ENCODE measurements at regions of chr9 and their contacts with region 1.

Region 1: DNA sequence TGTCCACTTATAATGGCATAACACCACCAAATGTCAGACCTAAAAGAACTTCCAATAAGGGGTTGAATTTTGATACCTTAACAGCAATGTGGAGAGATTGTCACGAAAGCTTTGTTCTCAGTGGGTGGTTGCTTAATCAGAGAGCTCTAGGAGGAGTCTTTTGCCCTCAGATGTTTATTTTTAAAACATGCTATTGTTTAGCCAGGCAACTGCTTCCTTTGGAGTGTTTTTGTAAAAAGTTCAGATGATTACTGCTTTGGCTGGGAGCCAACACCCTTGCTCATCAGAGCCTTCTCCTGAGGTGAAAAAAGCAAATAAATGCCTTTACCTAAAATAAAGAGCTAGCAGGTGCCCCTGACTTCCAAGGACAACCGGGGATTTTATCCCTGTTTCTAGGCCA is 65.0 kb downstream of the SLC1A1 start:
- DNase-seq: peak in 10 of 14 experiments; percentile 11 to 64 (median 34)
- ATAC-seq: peak; percentile 80
- H3K4me3 ChIP-seq: no peak overlapping the region
- H3K4me3 Mint-ChIP-seq: peak overlapping the region; percentile 1
- H3K27ac ChIP-seq: no peak overlapping the region
- H3K27ac Mint-ChIP-seq: peak overlapping the region; percentile 52
- H3K4me1 ChIP-seq: peaks cover 27% of the 10 kb centered on the region
- H3K4me1 Mint-ChIP-seq: peaks cover 59% of the 10 kb centered on the region
- H3K27me3 ChIP-seq: no peaks in the 10 kb centered on the region
- H3K27me3 Mint-ChIP-seq: no peaks in the 10 kb centered on the region
- CTCF ChIP-seq: no peak

Region 2: GRCh38 chr9:4435197-4435596 is 120.1 kb before region 1 on chr9:
- CTCF ChIA-PET with region 1: no interaction called
- POLR2A ChIA-PET with region 1: no interaction called
- intact Hi-C with region 1: no loop called
- DNase-seq: no peak
- ATAC-seq: no peak
- H3K4me3 ChIP-seq: no peak overlapping the region
- H3K4me3 Mint-ChIP-seq: no peak overlapping the region
- H3K27ac ChIP-seq: no peak overlapping the region
- H3K27ac Mint-ChIP-seq: no peak overlapping the region
- H3K4me1 ChIP-seq: no peaks in the 10 kb centered on the region
- H3K4me1 Mint-ChIP-seq: no peaks in the 10 kb centered on the region
- H3K27me3 ChIP-seq: no peaks in the 10 kb centered on the region
- H3K27me3 Mint-ChIP-seq: no peaks in the 10 kb centered on the region
- CTCF ChIP-seq: no peak

Region 3: DNA sequence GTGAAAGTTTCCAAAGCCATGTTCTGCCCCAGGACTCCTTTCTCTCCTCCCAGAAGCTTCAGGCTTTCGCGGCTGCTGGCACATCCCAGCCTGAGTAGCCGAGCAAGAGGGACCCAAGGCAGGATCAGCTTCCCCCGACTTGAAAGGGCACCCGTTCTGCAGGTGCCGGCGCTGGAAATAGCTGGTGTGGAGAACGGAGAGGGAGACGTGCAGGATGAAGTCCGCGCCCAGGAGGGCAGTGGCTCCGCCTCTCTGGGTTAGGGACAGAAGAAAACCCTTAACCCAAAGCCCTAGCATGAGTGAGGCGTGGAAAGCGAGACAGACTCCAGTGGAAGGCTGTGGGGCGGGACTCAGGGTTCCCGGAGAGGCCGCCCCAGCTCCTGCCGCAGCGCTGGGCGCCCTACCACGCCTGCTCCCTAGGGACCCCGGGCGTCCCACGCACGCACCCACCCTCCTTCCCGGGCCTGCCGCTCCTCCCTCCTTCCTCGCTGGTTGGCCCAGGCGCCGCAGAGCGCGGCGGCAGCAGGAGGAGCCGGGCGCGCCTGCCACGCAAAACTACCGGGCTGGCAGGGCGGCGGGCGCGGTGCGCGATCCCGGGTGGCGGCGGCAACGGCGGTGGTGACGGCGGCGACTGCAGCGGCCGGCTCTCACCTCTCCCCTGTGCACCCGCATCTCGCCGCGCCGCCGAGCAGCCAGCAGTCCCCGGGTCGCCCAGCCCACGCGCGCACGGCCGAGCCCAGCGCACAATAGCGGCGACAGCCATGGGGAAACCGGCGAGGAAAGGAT is 65.1 kb before region 1 on chr9 and contains the start of gene SLC1A1:
- CTCF ChIA-PET with region 1: no interaction called
- POLR2A ChIA-PET with region 1: interaction called, 6 read pairs
- intact Hi-C with region 1: loop called in 1 of 2 experiments (anchors 10 kb)
- DNase-seq: peak in 10 of 14 experiments; percentile 4 to 49 (median 26)
- ATAC-seq: peak; percentile 72
- H3K4me3 ChIP-seq: peak within 1 kb of the TSS; percentile 43
- H3K4me3 Mint-ChIP-seq: peak within 1 kb of the TSS; percentile 90
- H3K27ac ChIP-seq: no peak within 1 kb of the TSS
- H3K27ac Mint-ChIP-seq: no peak within 1 kb of the TSS
- H3K4me1 ChIP-seq: peaks cover 22% of the 10 kb centered on the region
- H3K4me1 Mint-ChIP-seq: peaks cover 31% of the 10 kb centered on the region
- H3K27me3 ChIP-seq: peaks cover 31 to 48% of the 10 kb centered on the region in 2 experiments
- H3K27me3 Mint-ChIP-seq: peaks cover 43% of the 10 kb centered on the region
- CTCF ChIP-seq: no peak
- total RNA-seq, gene SLC1A1: 0.11 to 0.14 TPM

Region 4: GRCh38 chr9:4590430-4591122 is 35.3 kb after region 1 on chr9:
- CTCF ChIA-PET with region 1: no interaction called
- POLR2A ChIA-PET with region 1: interaction called, 9 read pairs
- intact Hi-C with region 1: loop called in 1 of 2 experiments (anchors 5 kb)
- DNase-seq: no peak
- ATAC-seq: no peak
- H3K4me3 ChIP-seq: no peak overlapping the region
- H3K4me3 Mint-ChIP-seq: no peak overlapping the region
- H3K27ac ChIP-seq: no peak overlapping the region
- H3K27ac Mint-ChIP-seq: no peak overlapping the region
- H3K4me1 ChIP-seq: peaks cover 7% of the 10 kb centered on the region
- H3K4me1 Mint-ChIP-seq: peaks cover 26% of the 10 kb centered on the region
- H3K27me3 ChIP-seq: no peaks in the 10 kb centered on the region
- H3K27me3 Mint-ChIP-seq: no peaks in the 10 kb centered on the region
- CTCF ChIP-seq: no peak

Region 5: GRCh38 chr9:4700091-4700490 is 144.8 kb after region 1 on chr9:
- CTCF ChIA-PET with region 1: no interaction called
- POLR2A ChIA-PET with region 1: no interaction called
- intact Hi-C with region 1: no loop called
- DNase-seq: no peak
- ATAC-seq: no peak
- H3K4me3 ChIP-seq: no peak overlapping the region
- H3K4me3 Mint-ChIP-seq: no peak overlapping the region
- H3K27ac ChIP-seq: no peak overlapping the region
- H3K27ac Mint-ChIP-seq: no peak overlapping the region
- H3K4me1 ChIP-seq: peaks cover 3% of the 10 kb centered on the region
- H3K4me1 Mint-ChIP-seq: peaks cover 20% of the 10 kb centered on the region
- H3K27me3 ChIP-seq: no peaks in the 10 kb centered on the region
- H3K27me3 Mint-ChIP-seq: no peaks in the 10 kb centered on the region
- CTCF ChIP-seq: no peak

Measured in CD4-positive, alpha-beta T cell (primary cell).